ENCODE measurements at regions of chr6 and their contacts with region 1.

Region 1: GRCh38 chr6:158026054-158026900 is 44.6 kb downstream of the SYNJ2 start:
- DNase-seq: peak; percentile 91
- ATAC-seq: peak; percentile 83
- H3K4me3 Mint-ChIP-seq: peak overlapping the region; percentile 69
- H3K27ac Mint-ChIP-seq: peak overlapping the region; percentile 99
- H3K4me1 Mint-ChIP-seq: peaks cover 42% of the 10 kb centered on the region
- H3K27me3 Mint-ChIP-seq: no peaks in the 10 kb centered on the region

Region 2: DNA sequence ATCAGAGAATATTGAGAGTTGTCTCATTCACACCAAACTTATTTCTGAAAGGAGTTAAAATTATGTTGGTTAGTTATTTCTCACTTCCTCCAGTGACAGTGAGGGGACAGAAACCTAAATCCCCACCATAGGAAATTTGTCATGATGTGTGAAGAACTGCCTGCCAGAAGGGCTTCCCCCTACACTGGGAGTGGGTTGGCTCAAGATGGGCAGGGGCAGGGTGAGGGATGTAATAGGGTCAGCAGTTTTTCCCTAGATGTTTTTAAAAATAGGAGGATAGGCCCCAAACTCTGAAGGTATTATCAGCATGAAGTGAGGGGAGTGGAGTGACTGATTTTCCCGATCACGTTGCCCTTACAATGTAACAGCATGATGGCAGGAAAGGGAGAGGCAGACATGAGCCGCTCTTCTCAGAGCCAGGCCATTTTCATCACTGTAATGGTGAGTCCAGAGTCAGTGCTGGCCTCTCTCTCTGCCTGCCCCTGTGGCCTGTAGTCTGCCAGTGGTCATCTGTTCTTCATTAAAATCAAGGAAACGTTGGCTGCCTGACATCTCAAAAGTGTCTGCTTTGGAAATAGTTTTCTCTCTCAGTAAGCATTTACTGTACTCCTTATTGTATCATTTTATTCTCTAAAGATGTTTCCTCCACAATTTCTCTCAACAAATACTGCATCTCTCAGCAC is 104.5 kb before region 1 on chr6:
- CTCF ChIA-PET with region 1: no interaction called
- DNase-seq: no peak
- ATAC-seq: no peak
- H3K4me3 Mint-ChIP-seq: no peak overlapping the region
- H3K27ac Mint-ChIP-seq: no peak overlapping the region
- H3K4me1 Mint-ChIP-seq: no peaks in the 10 kb centered on the region
- H3K27me3 Mint-ChIP-seq: no peaks in the 10 kb centered on the region

Region 3: GRCh38 chr6:157981395-157982296 is 44.6 kb before region 1 on chr6 and contains the start of gene SYNJ2:
- CTCF ChIA-PET with region 1: interaction called, 31 read pairs
- DNase-seq: peak; percentile 90
- ATAC-seq: peak; percentile 92
- H3K4me3 Mint-ChIP-seq: peak within 1 kb of the TSS; percentile 89
- H3K27ac Mint-ChIP-seq: peak within 1 kb of the TSS; percentile 85
- H3K4me1 Mint-ChIP-seq: peaks cover 48% of the 10 kb centered on the region
- H3K27me3 Mint-ChIP-seq: peaks cover 14% of the 10 kb centered on the region
- total RNA-seq, gene SYNJ2: 41.2 to 42.7 TPM

Region 4: DNA sequence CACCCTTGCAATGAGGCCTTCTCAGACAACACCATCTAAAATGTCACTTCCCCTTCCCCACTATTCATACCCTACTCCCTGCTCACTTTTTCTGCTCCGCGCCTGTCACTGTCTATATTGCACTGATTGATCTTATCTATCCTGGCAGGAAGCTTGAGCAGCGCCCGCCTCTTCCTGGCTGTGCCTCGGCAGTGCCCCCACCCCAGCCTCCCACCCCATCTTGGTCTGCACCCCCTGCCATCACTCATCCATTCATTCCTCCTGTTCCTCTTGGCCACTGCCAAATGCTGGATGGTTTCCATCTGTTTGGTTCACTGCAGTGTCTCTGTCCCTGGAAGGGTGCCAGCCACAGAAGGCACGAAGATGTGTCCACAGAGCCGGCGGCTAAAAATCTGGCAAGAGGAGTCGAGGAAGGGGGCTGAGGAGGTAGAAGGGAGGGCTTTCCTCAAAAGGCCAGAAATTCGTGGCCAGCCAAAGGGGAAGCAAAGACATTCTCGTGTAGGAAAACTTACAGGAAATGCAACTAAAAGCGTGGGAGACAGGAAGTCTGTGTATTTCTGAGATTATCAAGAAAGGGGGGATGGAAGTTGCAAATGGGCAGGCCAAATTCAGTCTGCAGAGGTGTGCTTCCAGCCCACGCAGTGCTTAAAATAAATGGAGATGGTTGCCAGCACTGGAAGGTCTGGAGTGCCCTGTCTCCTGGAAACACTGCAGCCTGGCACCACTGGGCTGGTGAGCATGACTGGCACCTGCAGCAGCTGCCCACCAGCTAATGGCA is 17.0 kb before region 1 on chr6:
- CTCF ChIA-PET with region 1: interaction called, 21 read pairs
- DNase-seq: no peak
- ATAC-seq: peak; percentile 64
- H3K4me3 Mint-ChIP-seq: peak overlapping the region; percentile 2
- H3K27ac Mint-ChIP-seq: peak overlapping the region; percentile 64
- H3K4me1 Mint-ChIP-seq: peaks cover 65% of the 10 kb centered on the region
- H3K27me3 Mint-ChIP-seq: no peaks in the 10 kb centered on the region

Region 5: GRCh38 chr6:158014505-158015187 is 11.6 kb before region 1 on chr6:
- CTCF ChIA-PET with region 1: interaction called, 21 read pairs
- DNase-seq: no peak
- ATAC-seq: no peak
- H3K4me3 Mint-ChIP-seq: no peak overlapping the region
- H3K27ac Mint-ChIP-seq: peak overlapping the region; percentile 73
- H3K4me1 Mint-ChIP-seq: peaks cover 46% of the 10 kb centered on the region
- H3K27me3 Mint-ChIP-seq: no peaks in the 10 kb centered on the region

Region 6: GRCh38 chr6:158040051-158040803 is 13.9 kb after region 1 on chr6:
- CTCF ChIA-PET with region 1: interaction called, 18 read pairs
- DNase-seq: peak; percentile 83
- ATAC-seq: peak; percentile 82
- H3K4me3 Mint-ChIP-seq: peak overlapping the region; percentile 62
- H3K27ac Mint-ChIP-seq: peak overlapping the region; percentile 84
- H3K4me1 Mint-ChIP-seq: peaks cover 46% of the 10 kb centered on the region
- H3K27me3 Mint-ChIP-seq: no peaks in the 10 kb centered on the region

Region 7: DNA sequence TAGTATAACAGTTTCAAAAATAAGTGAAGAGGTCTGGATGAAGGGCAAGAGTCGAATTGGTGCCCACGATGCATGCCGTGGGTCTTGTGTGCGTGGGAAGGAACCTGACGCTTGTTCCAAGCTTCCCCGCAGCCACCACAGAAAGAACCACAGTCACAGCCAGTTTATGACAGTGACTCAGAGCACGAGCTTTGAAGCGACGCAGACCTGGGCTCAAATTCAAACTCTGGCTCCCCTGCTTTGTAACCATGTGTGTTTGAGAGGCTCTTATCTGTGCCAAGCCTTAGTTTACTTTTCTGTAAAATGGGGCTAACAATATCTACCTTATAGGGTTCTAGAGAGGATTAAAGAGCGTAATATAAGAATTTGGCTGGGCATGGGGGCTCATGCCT is 20.8 kb after region 1 on chr6:
- CTCF ChIA-PET with region 1: interaction called, 23 read pairs
- DNase-seq: peak; percentile 91
- ATAC-seq: peak; percentile 73
- H3K4me3 Mint-ChIP-seq: peak overlapping the region; percentile 9
- H3K27ac Mint-ChIP-seq: peak overlapping the region; percentile 83
- H3K4me1 Mint-ChIP-seq: peaks cover 36% of the 10 kb centered on the region
- H3K27me3 Mint-ChIP-seq: no peaks in the 10 kb centered on the region

Measured in activated CD8-positive, alpha-beta memory T cell treated with anti-CD3 and anti-CD28 coated beads, Interleukin-2, amount 10 ng/mL, durations not matched to agents 7 days and 5 days (primary cell).